Mammary epithelial cell (primary cell): ENCODE measurements at regions of chr6 and their contacts with region 1.

Region 1: DNA sequence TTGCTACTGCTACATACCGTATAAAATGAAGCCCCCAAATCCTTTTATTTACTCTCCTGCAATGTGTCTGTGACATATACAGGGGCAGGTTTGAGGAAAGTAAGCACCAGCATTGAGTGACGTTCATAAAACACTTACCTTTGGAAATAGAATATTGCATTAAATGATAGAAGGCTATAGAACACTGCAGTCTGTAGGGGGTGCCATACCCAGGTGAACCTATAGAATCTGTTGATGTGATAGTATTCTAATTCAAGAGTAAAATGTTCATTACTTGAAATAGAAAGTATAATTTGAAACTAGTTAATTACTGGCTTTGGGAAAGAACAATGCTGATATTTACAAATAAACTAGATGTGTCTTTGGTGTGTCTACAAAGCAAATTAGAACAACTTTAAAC is 47.0 kb upstream of the PRL start:
- DNase-seq: no peak
- H3K4me3 ChIP-seq: no peak overlapping the region
- H3K27ac ChIP-seq: no peak overlapping the region
- H3K4me1 ChIP-seq: no peaks in the 10 kb centered on the region
- H3K27me3 ChIP-seq: no peaks in the 10 kb centered on the region
- CTCF ChIP-seq: peak in 1 of 2 donors; percentile 53

Region 2: GRCh38 chr6:22471132-22471690 is 127.4 kb after region 1 on chr6:
- CTCF ChIA-PET with region 1: no interaction called
- dilution Hi-C with region 1: no loop called
- in situ Hi-C with region 1: no loop called
- intact Hi-C with region 1: loop called (anchors 10 kb)
- DNase-seq: peak; percentile 43
- H3K4me3 ChIP-seq: no peak overlapping the region
- H3K27ac ChIP-seq: no peak overlapping the region
- H3K4me1 ChIP-seq: no peaks in the 10 kb centered on the region
- H3K27me3 ChIP-seq: no peaks in the 10 kb centered on the region
- CTCF ChIP-seq: peak; percentile 6 to 44

Region 3: GRCh38 chr6:22600059-22600458 is 256.2 kb after region 1 on chr6:
- CTCF ChIA-PET with region 1: no interaction called
- dilution Hi-C with region 1: no loop called
- in situ Hi-C with region 1: no loop called
- intact Hi-C with region 1: loop called (anchors 5 kb)
- DNase-seq: no peak
- H3K4me3 ChIP-seq: no peak overlapping the region
- H3K27ac ChIP-seq: no peak overlapping the region
- H3K4me1 ChIP-seq: no peaks in the 10 kb centered on the region
- H3K27me3 ChIP-seq: no peaks in the 10 kb centered on the region
- CTCF ChIP-seq: no peak

Region 4: DNA sequence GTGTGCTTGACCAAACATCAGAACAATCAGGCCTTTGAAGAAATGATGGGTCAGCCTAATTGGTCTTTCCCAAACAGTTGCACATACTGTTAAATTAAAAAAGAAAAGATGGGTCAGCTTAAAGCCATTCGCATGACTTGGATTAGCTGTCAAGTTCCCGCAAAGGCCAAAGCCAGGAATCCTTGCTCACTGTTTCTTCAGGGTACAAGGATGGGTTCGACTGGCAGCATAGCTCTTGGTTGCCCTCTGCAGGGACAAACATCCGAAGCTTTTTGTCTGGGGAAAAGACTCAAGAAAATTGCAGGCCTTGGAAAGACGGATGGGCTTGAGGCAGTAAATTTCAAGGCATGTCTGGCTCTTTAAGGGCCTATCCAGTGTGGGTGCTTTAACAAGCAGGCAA is 393.5 kb after region 1 on chr6:
- CTCF ChIA-PET with region 1: no interaction called
- dilution Hi-C with region 1: no loop called
- in situ Hi-C with region 1: no loop called
- intact Hi-C with region 1: loop called (anchors 10 kb)
- DNase-seq: peak; percentile 17
- H3K4me3 ChIP-seq: no peak overlapping the region
- H3K27ac ChIP-seq: no peak overlapping the region
- H3K4me1 ChIP-seq: no peaks in the 10 kb centered on the region
- H3K27me3 ChIP-seq: no peaks in the 10 kb centered on the region
- CTCF ChIP-seq: peak; percentile 17 to 72